ENCODE measurements at regions of chr22 and their contacts with region 1.

Region 1: DNA sequence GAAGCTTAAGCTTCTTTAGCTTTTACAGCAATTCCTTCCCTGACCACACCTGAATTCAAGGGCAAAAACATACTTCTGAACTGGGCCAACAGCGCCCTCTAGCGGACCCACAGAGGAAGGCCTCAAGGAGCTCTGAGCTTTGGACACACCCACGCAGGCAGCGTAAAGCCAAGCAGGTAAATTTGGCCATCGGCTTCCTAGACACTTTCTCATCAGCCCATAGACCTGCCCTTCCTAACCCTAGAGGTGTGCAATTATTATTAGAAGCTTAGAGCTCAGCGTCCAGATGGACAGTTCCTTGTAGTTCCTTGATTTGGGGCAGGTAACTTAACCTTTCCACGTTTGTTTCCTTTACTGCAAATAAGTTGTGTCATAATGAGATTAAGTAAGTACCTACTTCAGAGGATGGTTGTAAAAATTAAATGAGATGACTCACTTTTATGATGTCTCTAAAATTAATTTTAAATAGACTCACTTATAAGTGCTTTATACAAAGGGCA is 25.7 kb upstream of the HMGXB4 start:
- DNase-seq: peak; percentile 84
- H3K4me3 Mint-ChIP-seq: no peak overlapping the region
- H3K27ac Mint-ChIP-seq: no peak overlapping the region
- H3K4me1 Mint-ChIP-seq: peaks cover 2% of the 10 kb centered on the region
- H3K27me3 Mint-ChIP-seq: peaks cover 22% of the 10 kb centered on the region

Region 2: GRCh38 chr22:35103761-35104160 is 127.9 kb before region 1 on chr22:
- CTCF ChIA-PET with region 1: no interaction called
- POLR2A ChIA-PET with region 1: no interaction called
- intact Hi-C with region 1: no loop called
- DNase-seq: no peak
- H3K4me3 Mint-ChIP-seq: no peak overlapping the region
- H3K27ac Mint-ChIP-seq: no peak overlapping the region
- H3K4me1 Mint-ChIP-seq: no peaks in the 10 kb centered on the region
- H3K27me3 Mint-ChIP-seq: peaks cover 9% of the 10 kb centered on the region

Region 3: DNA sequence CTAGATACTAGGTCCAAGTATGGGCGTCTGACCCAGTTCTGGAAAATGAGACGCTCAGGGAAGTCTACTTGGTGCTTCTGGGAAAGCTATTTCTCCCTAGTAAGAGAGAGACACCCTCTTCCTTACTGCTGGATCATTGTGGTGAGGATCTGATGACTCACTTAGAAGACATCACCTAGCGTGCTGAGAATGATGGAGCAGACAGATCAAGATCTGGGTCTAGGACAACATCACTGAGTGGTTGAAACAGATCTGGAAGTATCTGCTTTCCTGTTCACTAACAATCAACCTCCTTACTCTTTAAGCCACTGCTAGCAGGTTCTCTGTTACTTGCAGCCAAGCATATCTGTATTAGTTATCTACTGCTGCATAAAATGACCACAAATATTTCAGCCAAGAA is 12.6 kb before region 1 on chr22:
- CTCF ChIA-PET with region 1: interaction called, 14 read pairs
- POLR2A ChIA-PET with region 1: no interaction called
- intact Hi-C with region 1: no loop called
- DNase-seq: no peak
- H3K4me3 Mint-ChIP-seq: no peak overlapping the region
- H3K27ac Mint-ChIP-seq: no peak overlapping the region
- H3K4me1 Mint-ChIP-seq: no peaks in the 10 kb centered on the region
- H3K27me3 Mint-ChIP-seq: peaks cover 4% of the 10 kb centered on the region

Region 4: GRCh38 chr22:35257321-35258190 is 25.9 kb after region 1 on chr22 and contains the start of gene HMGXB4:
- CTCF ChIA-PET with region 1: interaction called, 12 read pairs
- POLR2A ChIA-PET with region 1: no interaction called
- intact Hi-C with region 1: no loop called
- DNase-seq: peak; percentile 90
- H3K4me3 Mint-ChIP-seq: peak within 1 kb of the TSS; percentile 90
- H3K27ac Mint-ChIP-seq: peak within 1 kb of the TSS; percentile 89
- H3K4me1 Mint-ChIP-seq: peaks cover 27% of the 10 kb centered on the region
- H3K27me3 Mint-ChIP-seq: no peaks in the 10 kb centered on the region
- total RNA-seq, gene HMGXB4: 33.9 to 35.7 TPM

Measured in activated CD4-positive, alpha-beta memory T cell treated with anti-CD3 and anti-CD28 coated beads for 36 hours (primary cell).